ENCODE measurements at regions of chr20 and their contacts with region 1.

Region 1: DNA sequence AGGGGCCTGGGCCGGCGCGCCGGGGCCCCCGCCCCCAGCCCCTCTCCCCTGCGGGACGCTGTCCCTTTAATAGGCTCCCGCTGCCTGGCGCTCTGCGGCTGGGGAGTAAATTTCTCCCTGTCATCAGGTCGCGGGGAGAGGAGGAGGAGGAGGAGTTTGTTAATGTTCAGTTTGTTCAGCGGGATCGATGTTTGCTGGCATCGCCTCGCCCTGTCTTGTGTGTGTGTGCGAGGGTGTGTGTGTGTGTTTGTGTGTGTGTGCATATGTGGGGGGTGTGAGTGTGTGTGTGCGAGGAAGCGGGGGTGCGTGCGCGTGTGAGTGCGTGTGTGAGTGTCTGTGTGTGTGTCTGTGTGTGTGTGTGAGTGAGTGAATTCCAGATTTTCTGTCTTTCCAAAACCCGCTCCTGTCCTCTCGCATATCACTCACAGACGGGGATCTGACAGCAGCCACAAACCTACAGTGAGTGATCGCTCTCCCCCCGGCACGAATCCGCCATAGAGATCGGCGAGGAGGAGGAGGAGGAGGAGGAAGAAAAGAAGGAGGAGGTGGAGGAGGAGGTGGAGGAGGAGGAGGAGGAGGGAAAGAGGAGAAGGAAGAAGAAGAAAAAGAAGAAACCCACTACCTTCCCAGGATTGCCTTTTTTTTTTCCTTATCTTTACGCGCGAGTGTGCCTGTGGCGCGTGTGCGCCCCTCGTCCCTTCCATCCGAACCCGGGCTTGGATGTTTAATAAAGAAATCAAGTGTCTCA is at the start of gene TSHZ2:
- DNase-seq: peak; percentile 74
- H3K4me3 Mint-ChIP-seq: peak within 1 kb of the TSS; percentile 87
- H3K27ac Mint-ChIP-seq: peak within 1 kb of the TSS; percentile 95
- H3K4me1 Mint-ChIP-seq: peaks cover 30% of the 10 kb centered on the region
- H3K27me3 Mint-ChIP-seq: peaks cover 12% of the 10 kb centered on the region
- total RNA-seq, gene TSHZ2: 28.9 to 36.0 TPM

Region 2: GRCh38 chr20:52410182-52410647 is 562.1 kb before region 1 on chr20:
- CTCF ChIA-PET with region 1: no interaction called
- POLR2A ChIA-PET with region 1: no interaction called
- intact Hi-C with region 1: loop called (anchors 5 kb)
- DNase-seq: peak; percentile 65
- H3K4me3 Mint-ChIP-seq: peak overlapping the region; percentile 38
- H3K27ac Mint-ChIP-seq: peak overlapping the region; percentile 63
- H3K4me1 Mint-ChIP-seq: peaks cover 64% of the 10 kb centered on the region
- H3K27me3 Mint-ChIP-seq: no peaks in the 10 kb centered on the region

Region 3: GRCh38 chr20:53021934-53022333 is 49.6 kb after region 1 on chr20:
- CTCF ChIA-PET with region 1: interaction called, 3 read pairs
- POLR2A ChIA-PET with region 1: interaction called, 24 read pairs
- intact Hi-C with region 1: loop called (anchors 1 kb)
- DNase-seq: peak; percentile 32
- H3K4me3 Mint-ChIP-seq: peak overlapping the region; percentile 12
- H3K27ac Mint-ChIP-seq: peak overlapping the region; percentile 92
- H3K4me1 Mint-ChIP-seq: peaks cover 79% of the 10 kb centered on the region
- H3K27me3 Mint-ChIP-seq: peaks cover under 1% of the 10 kb centered on the region

Region 4: DNA sequence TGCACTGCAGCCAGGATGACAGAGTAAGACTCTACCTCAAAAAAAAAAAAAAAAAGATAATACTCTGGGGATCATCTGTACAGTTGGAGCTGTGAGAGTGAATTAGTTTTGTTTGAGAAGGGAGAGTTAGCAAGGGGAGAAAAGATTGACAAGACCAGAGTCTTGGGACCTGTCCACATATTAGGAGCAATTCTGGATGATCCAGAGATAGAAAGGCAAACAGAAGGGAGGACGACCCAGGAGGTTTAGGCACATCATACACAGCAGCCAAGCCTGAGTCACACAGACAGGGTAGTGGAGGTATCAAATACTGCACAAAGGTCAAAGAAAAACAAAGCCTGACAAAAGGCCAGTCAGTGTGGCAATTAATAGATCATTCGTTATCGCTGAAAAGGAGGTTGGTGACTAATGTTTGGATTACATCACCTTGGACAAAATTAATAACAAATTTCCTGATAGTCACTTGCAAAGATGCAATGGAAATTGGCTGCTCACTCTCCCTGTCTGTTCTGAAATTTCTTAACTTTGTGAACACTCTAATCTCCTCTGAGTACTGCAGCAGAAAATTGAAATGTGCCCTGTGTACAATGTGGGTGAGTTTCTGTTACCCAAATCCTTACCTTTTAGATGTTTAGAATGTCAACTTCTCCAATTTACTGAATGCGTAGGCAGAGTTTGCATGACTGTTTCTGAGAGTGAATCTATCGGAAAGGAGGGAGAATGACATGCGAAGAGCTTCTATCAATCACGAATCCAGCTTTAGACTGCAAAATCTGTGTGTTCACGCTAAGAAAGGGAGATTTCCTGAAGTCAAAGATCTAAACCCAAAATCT is 105.2 kb after region 1 on chr20:
- CTCF ChIA-PET with region 1: no interaction called
- POLR2A ChIA-PET with region 1: interaction called, 66 read pairs
- intact Hi-C with region 1: loop called (anchors 1 kb)
- DNase-seq: peak; percentile 51
- H3K4me3 Mint-ChIP-seq: no peak overlapping the region
- H3K27ac Mint-ChIP-seq: no peak overlapping the region
- H3K4me1 Mint-ChIP-seq: peaks cover 47% of the 10 kb centered on the region
- H3K27me3 Mint-ChIP-seq: no peaks in the 10 kb centered on the region

Region 5: GRCh38 chr20:53216856-53217576 is 244.7 kb after region 1 on chr20:
- CTCF ChIA-PET with region 1: no interaction called
- POLR2A ChIA-PET with region 1: interaction called, 10 read pairs
- intact Hi-C with region 1: loop called (anchors 2 kb)
- DNase-seq: peak; percentile 83
- H3K4me3 Mint-ChIP-seq: no peak overlapping the region
- H3K27ac Mint-ChIP-seq: peak overlapping the region; percentile 72
- H3K4me1 Mint-ChIP-seq: peaks cover 51% of the 10 kb centered on the region
- H3K27me3 Mint-ChIP-seq: no peaks in the 10 kb centered on the region

Measured in activated CD4-positive, alpha-beta memory T cell treated with anti-CD3 and anti-CD28 coated beads for 36 hours (primary cell).